Heart right ventricle (tissue), 16 donors: ENCODE measurements at regions of chr11 and their contacts with region 1.

Region 1: GRCh38 chr11:77381729-77382685 is 80.5 kb upstream of the GDPD4 start:
- DNase-seq: no peak
- ATAC-seq: peak in 7 of 8 donors; percentile 43 to 85 (median 60)
- H3K4me3 ChIP-seq: no peak overlapping the region
- H3K27ac ChIP-seq: peak overlapping the region in 5 of 10 donors; percentile 7 to 60 (median 27)
- H3K4me1 ChIP-seq: peaks cover 0 to 31% (median 20%) of the 10 kb centered on the region in 9 donors
- H3K27me3 ChIP-seq: no peaks in the 10 kb centered on the region
- CTCF ChIP-seq: no peak

Region 2: GRCh38 chr11:77421041-77421723 is 39.2 kb after region 1 on chr11:
- intact Hi-C with region 1: no loop called
- DNase-seq: no peak
- ATAC-seq: no peak
- H3K4me3 ChIP-seq: no peak overlapping the region
- H3K27ac ChIP-seq: no peak overlapping the region
- H3K4me1 ChIP-seq: peaks cover 0 to 19% (median 0%) of the 10 kb centered on the region in 9 donors
- H3K27me3 ChIP-seq: no peaks in the 10 kb centered on the region
- CTCF ChIP-seq: no peak

Region 3: DNA sequence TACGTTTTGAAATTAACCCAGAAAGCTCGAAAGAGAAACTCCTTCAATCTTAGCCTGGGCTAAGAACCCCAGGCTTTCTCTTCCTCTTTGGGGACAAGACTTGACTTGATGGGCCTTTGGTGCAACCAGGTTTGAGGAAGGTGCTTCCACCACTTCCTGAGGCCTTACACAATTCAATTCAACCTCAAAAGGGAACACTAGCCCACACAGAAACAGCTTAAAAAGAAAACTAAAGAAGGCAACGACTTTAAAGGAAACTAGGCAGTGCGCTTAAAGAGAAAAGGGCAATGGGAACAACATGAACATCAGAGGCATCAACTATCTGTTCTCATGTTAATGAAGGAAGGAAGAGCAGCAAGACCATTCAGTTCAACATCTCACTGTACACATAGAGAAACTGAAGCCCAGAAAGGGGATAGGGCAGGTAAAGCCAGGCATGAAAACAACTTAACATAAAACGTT is 67.1 kb after region 1 on chr11:
- intact Hi-C with region 1: loop called in 1 of 10 experiments (anchors 10 kb)
- DNase-seq: no peak
- ATAC-seq: no peak
- H3K4me3 ChIP-seq: no peak overlapping the region
- H3K27ac ChIP-seq: peak overlapping the region in 1 of 10 donors; percentile 5
- H3K4me1 ChIP-seq: peaks cover 0 to 39% (median 0%) of the 10 kb centered on the region in 9 donors
- H3K27me3 ChIP-seq: no peaks in the 10 kb centered on the region
- CTCF ChIP-seq: no peak

Region 4: GRCh38 chr11:77647654-77648305 is 265.8 kb after region 1 on chr11:
- intact Hi-C with region 1: no loop called
- DNase-seq: no peak
- ATAC-seq: no peak
- H3K4me3 ChIP-seq: no peak overlapping the region
- H3K27ac ChIP-seq: no peak overlapping the region
- H3K4me1 ChIP-seq: no peaks in the 10 kb centered on the region
- H3K27me3 ChIP-seq: peaks cover 0 to 13% (median 0%) of the 10 kb centered on the region in 7 donors
- CTCF ChIP-seq: no peak

Region 5: DNA sequence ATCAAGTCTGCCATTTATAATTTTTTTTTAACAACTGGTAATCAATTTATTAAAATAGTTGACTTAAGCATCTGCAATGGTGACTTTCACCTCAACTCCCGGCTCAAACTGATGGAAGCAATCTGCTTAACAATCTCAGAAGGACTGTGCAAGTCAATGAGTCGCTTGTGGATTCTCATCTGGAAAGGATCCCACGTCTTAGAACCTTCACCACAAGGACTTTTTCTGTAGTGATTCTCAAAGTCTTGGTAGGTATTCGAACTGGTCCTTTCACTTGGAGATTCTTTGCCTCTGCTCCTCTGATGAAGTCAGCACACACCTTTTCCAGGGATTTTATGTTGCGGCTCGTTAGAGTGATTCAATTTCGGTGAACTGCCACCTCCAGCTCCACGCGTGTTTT is 431.2 kb after region 1 on chr11:
- intact Hi-C with region 1: no loop called
- DNase-seq: no peak
- ATAC-seq: no peak
- H3K4me3 ChIP-seq: no peak overlapping the region
- H3K27ac ChIP-seq: no peak overlapping the region
- H3K4me1 ChIP-seq: peaks cover 2 to 52% (median 30%) of the 10 kb centered on the region in 9 donors
- H3K27me3 ChIP-seq: no peaks in the 10 kb centered on the region
- CTCF ChIP-seq: no peak